ENCODE measurements at regions of chr9 and their contacts with region 1.

Region 1: GRCh38 chr9:35385042-35385441 is 104.9 kb upstream of the RUSC2 start:
- DNase-seq: peak; percentile 37
- H3K4me3 ChIP-seq: no peak overlapping the region
- H3K27ac ChIP-seq: no peak overlapping the region
- H3K27me3 ChIP-seq: no peaks in the 10 kb centered on the region
- CTCF ChIP-seq: peak; percentile 69

Region 2: DNA sequence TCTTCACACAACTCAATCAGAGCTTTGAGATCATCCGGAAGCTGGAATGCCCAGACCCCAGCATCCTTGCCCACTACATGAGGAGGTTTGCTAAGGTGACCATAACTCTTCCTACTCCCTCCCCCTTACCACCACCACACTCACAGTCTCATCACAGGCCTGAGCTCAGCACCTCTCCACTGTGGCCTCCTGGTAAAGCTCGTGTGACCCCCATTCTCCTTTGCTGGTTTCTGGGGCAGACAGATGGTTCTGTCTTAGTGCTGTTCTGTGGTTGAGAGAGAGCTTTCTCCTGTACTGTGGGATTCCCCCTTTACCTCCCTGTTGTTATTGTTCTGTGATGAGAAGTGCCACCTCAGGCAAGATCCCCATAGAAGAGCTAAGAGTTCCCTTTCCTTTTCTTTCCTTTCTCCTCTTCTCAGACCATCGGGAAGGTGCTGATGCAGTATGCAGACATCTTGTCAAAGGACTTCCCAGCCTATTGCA is 12.2 kb after region 1 on chr9:
- CTCF ChIA-PET with region 1: interaction called, 12 read pairs
- POLR2A ChIA-PET with region 1: no interaction called
- DNase-seq: no peak
- H3K4me3 ChIP-seq: no peak overlapping the region
- H3K27ac ChIP-seq: no peak overlapping the region
- H3K27me3 ChIP-seq: no peaks in the 10 kb centered on the region
- CTCF ChIP-seq: no peak